Heart right ventricle (tissue), 16 donors: ENCODE measurements at regions of chr11 and their contacts with region 1.

Region 1: DNA sequence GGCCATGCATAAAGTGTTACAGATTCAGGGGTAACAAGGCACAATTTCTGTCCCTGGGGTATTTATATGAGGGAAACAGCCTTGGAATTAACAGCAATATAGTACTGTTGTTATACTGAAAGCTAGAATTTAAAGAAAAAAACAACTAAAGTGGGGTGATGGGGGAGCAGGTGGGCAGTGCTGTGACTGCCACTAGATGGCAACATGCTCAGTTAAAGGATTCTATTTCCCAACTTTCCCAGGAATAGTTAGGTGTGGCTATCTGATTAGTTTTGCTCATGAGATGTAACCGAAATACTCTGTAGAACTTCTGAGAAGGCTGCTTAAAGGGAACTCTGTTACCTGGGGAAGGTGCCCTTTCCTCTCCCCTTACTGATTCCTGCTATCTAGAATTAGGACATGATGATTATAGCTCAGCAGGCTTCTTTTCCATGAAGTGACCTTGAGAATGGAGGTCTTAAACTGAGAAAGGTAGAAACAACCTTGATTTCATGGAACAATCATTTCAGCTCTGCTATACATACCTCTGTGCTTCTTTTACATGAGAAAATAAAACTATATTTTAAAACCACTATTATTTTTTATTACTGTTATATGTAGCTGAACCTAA is 102.6 kb downstream of the RELT start:
- DNase-seq: no peak
- ATAC-seq: peak in 2 of 8 donors; percentile 42 to 53
- H3K4me3 ChIP-seq: no peak overlapping the region
- H3K27ac ChIP-seq: no peak overlapping the region
- H3K4me1 ChIP-seq: peaks cover 0 to 25% (median 0%) of the 10 kb centered on the region in 9 donors
- H3K27me3 ChIP-seq: no peaks in the 10 kb centered on the region
- CTCF ChIP-seq: peak; percentile 23 to 68 (median 57)

Region 2: GRCh38 chr11:73463359-73463758 is 15.5 kb before region 1 on chr11:
- intact Hi-C with region 1: no loop called
- DNase-seq: no peak
- ATAC-seq: no peak
- H3K4me3 ChIP-seq: no peak overlapping the region
- H3K27ac ChIP-seq: peak overlapping the region in 2 of 10 donors; percentile 45 to 70
- H3K4me1 ChIP-seq: peaks cover 4 to 81% (median 55%) of the 10 kb centered on the region in 9 donors
- H3K27me3 ChIP-seq: no peaks in the 10 kb centered on the region
- CTCF ChIP-seq: no peak

Region 3: GRCh38 chr11:73633999-73634398 is 155.2 kb after region 1 on chr11:
- intact Hi-C with region 1: loop called in 1 of 10 experiments (anchors 10 kb)
- DNase-seq: no peak
- ATAC-seq: no peak
- H3K4me3 ChIP-seq: no peak overlapping the region
- H3K27ac ChIP-seq: no peak overlapping the region
- H3K4me1 ChIP-seq: no peaks in the 10 kb centered on the region
- H3K27me3 ChIP-seq: no peaks in the 10 kb centered on the region
- CTCF ChIP-seq: no peak

Region 4: DNA sequence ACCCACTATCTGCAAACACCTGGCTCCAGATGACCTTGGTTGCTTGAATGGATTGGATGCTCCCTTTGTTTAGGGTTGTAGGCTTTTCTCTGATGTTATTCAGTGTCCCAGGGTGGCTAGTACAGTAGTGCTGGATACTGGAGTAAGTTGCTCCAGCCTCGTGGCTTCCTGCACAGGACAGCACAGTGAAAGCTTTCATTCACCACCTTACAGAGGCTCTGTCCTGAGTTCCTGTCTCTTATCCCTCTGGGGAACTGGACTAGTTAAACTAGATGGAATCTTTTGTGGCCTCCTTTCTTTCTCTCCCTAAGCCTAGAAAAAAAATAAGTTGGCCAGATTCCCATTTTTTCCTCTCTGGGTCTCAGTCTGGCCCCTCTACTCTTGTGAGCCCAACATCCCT is 351.4 kb after region 1 on chr11:
- intact Hi-C with region 1: no loop called
- DNase-seq: no peak
- ATAC-seq: no peak
- H3K4me3 ChIP-seq: no peak overlapping the region
- H3K27ac ChIP-seq: no peak overlapping the region
- H3K4me1 ChIP-seq: no peaks in the 10 kb centered on the region
- H3K27me3 ChIP-seq: no peaks in the 10 kb centered on the region
- CTCF ChIP-seq: no peak